GM12878 (cell line): ENCODE measurements at regions of chr16 and their contacts with region 1.

Region 1: GRCh38 chr16:46853713-46854443 is 22.9 kb upstream of the C16orf87 start:
- DNase-seq: no peak
- ATAC-seq: peak; percentile 88
- H3K4me3 ChIP-seq: no peak overlapping the region
- H3K27ac ChIP-seq: no peak overlapping the region
- H3K4me1 ChIP-seq: peaks cover 4% of the 10 kb centered on the region; the same call in 1 of the 2 replicates
- H3K27me3 ChIP-seq: no peaks in the 10 kb centered on the region
- CTCF ChIP-seq: peak; percentile 87 to 96 (median 91)
- EP300 ChIP-seq: no peak
- POLR2A ChIP-seq: no peak
- RAD21 ChIP-seq: peak; percentile 98

Region 2: GRCh38 chr16:46830902-46831647 is 22.8 kb before region 1 on chr16 and contains the start of gene C16orf87:
- CTCF ChIA-PET with region 1: interaction called, 10 read pairs
- POLR2A ChIA-PET with region 1: no interaction called
- RAD21 ChIA-PET with region 1: interaction called, 5 read pairs
- SMC1A ChIA-PET with region 1: interaction called, 4 read pairs
- in situ Hi-C with region 1: no loop called
- intact Hi-C with region 1: no loop called
- DNase-seq: peak; percentile 63
- ATAC-seq: peak; percentile 93
- H3K4me3 ChIP-seq: peak within 1 kb of the TSS; percentile 81
- H3K27ac ChIP-seq: peak within 1 kb of the TSS; percentile 72
- H3K4me1 ChIP-seq: peaks cover 6% of the 10 kb centered on the region; the same call in 1 of the 2 replicates
- H3K27me3 ChIP-seq: no peaks in the 10 kb centered on the region
- CTCF ChIP-seq: no peak
- EP300 ChIP-seq: 0 out of 4 replicates have a peak, but pooled peaks of 1 of the 2 experiments have one; percentile 16
- POLR2A ChIP-seq: peak; percentile 81
- RAD21 ChIP-seq: no peak
- polyA plus RNA-seq, gene C16orf87: 49.0 to 51.8 TPM

Region 3: GRCh38 chr16:46889942-46890300 is 36.0 kb after region 1 on chr16:
- CTCF ChIA-PET with region 1: interaction called, 10 read pairs
- POLR2A ChIA-PET with region 1: no interaction called
- RAD21 ChIA-PET with region 1: interaction called, 5 read pairs
- SMC1A ChIA-PET with region 1: interaction called, 5 read pairs
- in situ Hi-C with region 1: no loop called
- intact Hi-C with region 1: no loop called
- DNase-seq: no peak
- ATAC-seq: peak; percentile 85
- H3K4me3 ChIP-seq: no peak overlapping the region
- H3K27ac ChIP-seq: peak overlapping the region; percentile 6; the same call in 1 of the 2 replicates
- H3K4me1 ChIP-seq: peaks cover 12% of the 10 kb centered on the region
- H3K27me3 ChIP-seq: no peaks in the 10 kb centered on the region
- CTCF ChIP-seq: no peak
- EP300 ChIP-seq: no peak
- POLR2A ChIP-seq: no peak
- RAD21 ChIP-seq: no peak

Region 4: GRCh38 chr16:46908540-46909372 is 54.9 kb after region 1 on chr16:
- CTCF ChIA-PET with region 1: interaction called, 217 read pairs
- POLR2A ChIA-PET with region 1: interaction called, 3 read pairs
- RAD21 ChIA-PET with region 1: interaction called, 77 read pairs
- SMC1A ChIA-PET with region 1: interaction called, 70 read pairs
- in situ Hi-C with region 1: no loop called
- intact Hi-C with region 1: loop called (anchors 1 kb)
- DNase-seq: no peak
- ATAC-seq: peak; percentile 70
- H3K4me3 ChIP-seq: no peak overlapping the region
- H3K27ac ChIP-seq: no peak overlapping the region
- H3K4me1 ChIP-seq: peaks cover 22% of the 10 kb centered on the region
- H3K27me3 ChIP-seq: no peaks in the 10 kb centered on the region
- CTCF ChIP-seq: peak; percentile 58 to 67 (median 64)
- EP300 ChIP-seq: no peak
- POLR2A ChIP-seq: no peak
- RAD21 ChIP-seq: peak; percentile 76

Region 5: GRCh38 chr16:46918861-46919792 is 65.2 kb after region 1 on chr16:
- CTCF ChIA-PET with region 1: interaction called, 217 read pairs
- POLR2A ChIA-PET with region 1: no interaction called
- RAD21 ChIA-PET with region 1: interaction called, 18 read pairs
- SMC1A ChIA-PET with region 1: interaction called, 35 read pairs
- in situ Hi-C with region 1: loop called (anchors 5 kb)
- intact Hi-C with region 1: no loop called
- DNase-seq: peak; percentile 54
- ATAC-seq: peak; percentile 84
- H3K4me3 ChIP-seq: peak overlapping the region; percentile 37; the same call in 1 of the 2 replicates
- H3K27ac ChIP-seq: 0 out of 2 replicates have a peak overlapping the region, but pooled peaks have one; percentile 39
- H3K4me1 ChIP-seq: peaks cover 19% of the 10 kb centered on the region
- H3K27me3 ChIP-seq: no peaks in the 10 kb centered on the region
- CTCF ChIP-seq: peak; percentile 37 to 67 (median 51); a peak in 5 of 6 replicates
- EP300 ChIP-seq: no peak
- POLR2A ChIP-seq: peak; percentile 51
- RAD21 ChIP-seq: peak; percentile 69

Region 6: GRCh38 chr16:46929378-46930332 is 75.8 kb after region 1 on chr16:
- CTCF ChIA-PET with region 1: interaction called, 70 read pairs
- POLR2A ChIA-PET with region 1: no interaction called
- RAD21 ChIA-PET with region 1: interaction called, 12 read pairs
- SMC1A ChIA-PET with region 1: interaction called, 31 read pairs
- in situ Hi-C with region 1: loop called (anchors 5 kb)
- intact Hi-C with region 1: loop called (anchors 1 kb)
- DNase-seq: no peak
- ATAC-seq: peak; percentile 97
- H3K4me3 ChIP-seq: no peak overlapping the region
- H3K27ac ChIP-seq: no peak overlapping the region
- H3K4me1 ChIP-seq: no peaks in the 10 kb centered on the region
- H3K27me3 ChIP-seq: no peaks in the 10 kb centered on the region
- CTCF ChIP-seq: peak; percentile 88 to 91 (median 91)
- EP300 ChIP-seq: no peak
- POLR2A ChIP-seq: no peak
- RAD21 ChIP-seq: peak; percentile 81

Region 7: GRCh38 chr16:48164907-48165726 is 1311.2 kb after region 1 on chr16:
- CTCF ChIA-PET with region 1: interaction called, 14 read pairs
- POLR2A ChIA-PET with region 1: no interaction called
- RAD21 ChIA-PET with region 1: interaction called, 7 read pairs
- SMC1A ChIA-PET with region 1: interaction called, 4 read pairs
- in situ Hi-C with region 1: loop called (anchors 10 kb)
- intact Hi-C with region 1: loop called (anchors 5 kb)
- DNase-seq: no peak
- ATAC-seq: peak; percentile 98
- H3K4me3 ChIP-seq: no peak overlapping the region
- H3K27ac ChIP-seq: no peak overlapping the region
- H3K4me1 ChIP-seq: peaks cover 8% of the 10 kb centered on the region; the same call in 1 of the 2 replicates
- H3K27me3 ChIP-seq: no peaks in the 10 kb centered on the region
- CTCF ChIP-seq: peak; percentile 88 to 94 (median 90)
- EP300 ChIP-seq: no peak
- POLR2A ChIP-seq: no peak
- RAD21 ChIP-seq: peak; percentile 93